ENCODE measurements at regions of chr4 and their contacts with region 1.

Region 1: DNA sequence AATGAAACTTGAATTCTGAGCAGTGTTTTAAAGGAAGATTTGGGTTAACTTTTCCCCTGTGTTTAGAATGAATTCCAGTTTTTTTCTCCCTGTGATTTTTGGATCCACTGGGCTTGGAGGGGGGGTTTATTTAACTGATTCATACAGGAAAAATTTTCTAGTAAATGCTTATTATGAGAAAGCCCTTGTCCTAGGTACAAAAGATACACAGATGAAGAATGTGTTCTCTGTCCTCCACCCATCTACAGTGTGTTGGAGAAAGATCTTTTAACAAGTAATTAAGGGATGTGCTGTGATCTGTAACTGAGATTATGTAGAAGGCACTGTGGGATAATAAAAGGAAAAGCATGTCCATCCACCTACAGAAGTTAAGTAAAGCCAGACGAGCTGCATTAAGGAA is 103.9 kb downstream of the STIM2 start:
- DNase-seq: no peak
- ATAC-seq: no peak
- H3K4me3 ChIP-seq: no peak overlapping the region
- H3K4me3 Mint-ChIP-seq: no peak overlapping the region
- H3K27ac ChIP-seq: no peak overlapping the region
- H3K27ac Mint-ChIP-seq: no peak overlapping the region
- H3K4me1 ChIP-seq: peaks cover 4 to 10% of the 10 kb centered on the region in 2 donors
- H3K4me1 Mint-ChIP-seq: peaks cover 53% of the 10 kb centered on the region
- H3K27me3 ChIP-seq: no peaks in the 10 kb centered on the region
- H3K27me3 Mint-ChIP-seq: no peaks in the 10 kb centered on the region
- CTCF ChIP-seq: no peak

Region 2: DNA sequence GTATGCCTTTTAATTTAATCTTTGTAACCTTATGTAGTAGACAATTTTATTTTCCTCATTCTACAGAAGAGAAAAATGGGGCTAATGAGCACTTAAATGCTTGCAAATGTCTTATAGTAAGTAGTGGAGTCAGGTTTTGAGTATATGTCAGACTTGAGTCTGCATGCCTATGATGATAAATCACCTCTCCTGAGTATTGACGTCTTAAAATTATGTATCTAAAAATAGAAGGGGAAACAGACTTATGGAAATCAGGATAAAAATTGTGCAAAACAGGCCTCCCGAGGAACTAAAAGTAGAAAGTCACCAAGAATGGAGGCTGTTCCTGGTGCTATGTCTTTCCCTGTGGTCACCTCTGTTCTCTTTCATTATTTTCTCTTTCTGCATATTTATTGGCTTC is 11.1 kb before region 1 on chr4:
- CTCF ChIA-PET with region 1: no interaction called
- POLR2A ChIA-PET with region 1: no interaction called
- intact Hi-C with region 1: loop called (anchors 2 kb)
- DNase-seq: no peak
- ATAC-seq: no peak
- H3K4me3 ChIP-seq: peak overlapping the region in 1 of 5 experiments; percentile 8
- H3K4me3 Mint-ChIP-seq: peak overlapping the region; percentile 49
- H3K27ac ChIP-seq: peak overlapping the region in 1 of 2 donors; percentile 44
- H3K27ac Mint-ChIP-seq: peak overlapping the region; percentile 66
- H3K4me1 ChIP-seq: peaks cover 7 to 19% of the 10 kb centered on the region in 2 donors
- H3K4me1 Mint-ChIP-seq: peaks cover 31% of the 10 kb centered on the region
- H3K27me3 ChIP-seq: no peaks in the 10 kb centered on the region
- H3K27me3 Mint-ChIP-seq: no peaks in the 10 kb centered on the region
- CTCF ChIP-seq: no peak

Region 3: DNA sequence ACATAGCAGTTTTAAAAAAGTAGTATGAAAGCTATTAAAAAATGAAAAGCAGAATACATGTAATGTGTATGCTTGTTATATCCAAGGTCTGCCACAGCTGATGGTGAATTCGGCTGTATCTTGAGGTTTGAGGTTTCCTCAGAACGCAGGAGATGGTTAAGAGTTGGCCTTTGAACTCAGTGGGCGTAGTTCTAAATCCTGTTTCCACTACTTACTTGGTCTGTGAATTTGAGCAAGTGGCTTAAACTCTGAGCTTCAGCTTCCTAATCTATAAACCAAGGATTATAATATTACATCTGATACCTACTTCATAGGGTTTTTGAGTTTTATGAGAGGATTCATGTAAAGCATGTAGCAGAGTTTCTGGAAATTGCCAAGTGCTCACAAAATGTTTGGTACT is 21.4 kb after region 1 on chr4:
- CTCF ChIA-PET with region 1: no interaction called
- POLR2A ChIA-PET with region 1: no interaction called
- intact Hi-C with region 1: loop called (anchors 2 kb)
- DNase-seq: peak; percentile 63
- ATAC-seq: peak; percentile 89
- H3K4me3 ChIP-seq: no peak overlapping the region
- H3K4me3 Mint-ChIP-seq: no peak overlapping the region
- H3K27ac ChIP-seq: peak overlapping the region in 1 of 2 donors; percentile 55
- H3K27ac Mint-ChIP-seq: no peak overlapping the region
- H3K4me1 ChIP-seq: peaks cover 26 to 34% of the 10 kb centered on the region in 2 donors
- H3K4me1 Mint-ChIP-seq: peaks cover 53% of the 10 kb centered on the region
- H3K27me3 ChIP-seq: no peaks in the 10 kb centered on the region
- H3K27me3 Mint-ChIP-seq: no peaks in the 10 kb centered on the region
- CTCF ChIP-seq: no peak

Region 4: DNA sequence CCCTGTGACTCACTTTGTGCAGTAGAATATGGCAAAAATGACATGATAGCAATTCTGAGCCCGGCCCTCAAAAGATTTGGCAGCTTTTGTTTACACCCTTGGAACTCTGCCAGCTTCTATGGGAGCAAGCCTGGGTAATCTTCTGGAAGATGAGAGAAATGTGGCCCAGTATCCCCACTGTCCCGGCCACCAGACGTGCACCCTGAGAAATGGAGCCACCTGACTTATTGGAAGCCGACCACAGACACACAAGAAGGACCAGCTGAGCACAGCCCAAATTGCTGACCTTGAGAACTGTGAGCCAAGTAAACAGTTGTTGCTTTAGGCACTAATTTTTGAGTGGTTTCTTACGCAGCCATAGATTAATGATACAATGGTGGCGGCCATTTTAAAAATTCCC is 93.2 kb after region 1 on chr4:
- CTCF ChIA-PET with region 1: no interaction called
- POLR2A ChIA-PET with region 1: no interaction called
- intact Hi-C with region 1: no loop called
- DNase-seq: no peak
- ATAC-seq: no peak
- H3K4me3 ChIP-seq: no peak overlapping the region
- H3K4me3 Mint-ChIP-seq: no peak overlapping the region
- H3K27ac ChIP-seq: no peak overlapping the region
- H3K27ac Mint-ChIP-seq: no peak overlapping the region
- H3K4me1 ChIP-seq: no peaks in the 10 kb centered on the region
- H3K4me1 Mint-ChIP-seq: no peaks in the 10 kb centered on the region
- H3K27me3 ChIP-seq: peaks cover 0 to 7% (median 1%) of the 10 kb centered on the region in 4 experiments
- H3K27me3 Mint-ChIP-seq: peaks cover 31% of the 10 kb centered on the region
- CTCF ChIP-seq: no peak